Head of caudate nucleus (tissue), 42 donors: ENCODE measurements at regions of chr7 and their contacts with region 1.

Region 1: GRCh38 chr7:31782411-31782991 is 95.5 kb downstream of the PPP1R17 start:
- DNase-seq: peak in 24 of 42 donors; percentile 5 to 66 (median 27)

Region 2: GRCh38 chr7:31883761-31884164 is 101.3 kb after region 1 on chr7:
- intact Hi-C with region 1: loop called (anchors 10 kb)
- DNase-seq: peak in 41 of 42 donors; percentile 7 to 89 (median 64)

Region 3: DNA sequence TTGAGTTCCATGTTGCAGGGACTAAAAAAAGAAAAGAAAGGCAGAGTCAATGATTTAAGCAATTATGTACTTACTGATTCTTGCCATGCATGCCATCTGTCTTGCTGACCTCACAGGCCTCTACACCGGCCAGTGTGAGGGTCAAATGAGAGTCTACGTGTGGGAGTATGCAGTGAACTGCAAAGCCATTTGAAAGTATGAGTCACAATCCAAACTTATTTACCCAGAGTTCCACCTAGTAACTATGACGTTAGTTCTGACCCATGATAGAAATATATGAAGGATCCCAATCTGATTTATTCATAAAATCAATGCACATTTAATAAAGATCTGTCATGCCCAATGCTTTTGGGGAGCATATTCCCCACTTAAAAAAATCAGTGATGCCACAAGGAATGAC is 261.2 kb after region 1 on chr7:
- intact Hi-C with region 1: no loop called
- DNase-seq: no peak

Region 4: DNA sequence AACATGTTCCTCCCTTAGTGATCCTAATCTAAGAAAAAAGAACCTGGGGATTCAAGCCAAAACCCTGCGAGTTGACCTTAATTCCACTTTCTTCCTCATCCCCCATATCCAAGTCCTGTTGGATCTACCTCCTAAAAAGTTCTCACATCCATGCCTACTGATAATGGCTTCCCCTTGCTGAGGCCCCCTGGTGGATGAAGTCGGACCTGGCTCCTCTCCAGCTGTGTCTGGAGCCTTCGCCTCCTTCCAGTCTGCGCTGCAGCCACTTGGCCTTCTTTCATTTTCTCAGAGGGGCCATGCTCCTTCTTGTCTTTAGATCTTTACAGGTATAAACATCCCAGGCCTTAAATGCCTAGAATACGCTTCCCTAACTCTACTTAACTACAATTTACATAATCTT is 279.6 kb after region 1 on chr7:
- intact Hi-C with region 1: loop called (anchors 10 kb)
- DNase-seq: peak in 36 of 42 donors; percentile 38 to 92 (median 72)